IMR-90 (cell line): ENCODE measurements at regions of chr9 and their contacts with region 1.

Region 1: GRCh38 chr9:27413506-27414219 is 110.4 kb upstream of the IFNK start:
- DNase-seq: no peak
- ATAC-seq: no peak
- H3K4me3 ChIP-seq: peak overlapping the region; percentile 31; the same call in 1 of the 2 replicates
- H3K27ac ChIP-seq: no peak overlapping the region
- H3K4me1 ChIP-seq: no peaks in the 10 kb centered on the region
- H3K27me3 ChIP-seq: no peaks in the 10 kb centered on the region; the same call in 1 of the 2 replicates
- CTCF ChIP-seq: no peak
- POLR2A ChIP-seq: no peak
- RAD21 ChIP-seq: no peak

Region 2: GRCh38 chr9:26375448-26375847 is 1038.2 kb before region 1 on chr9:
- CTCF ChIA-PET with region 1: no interaction called
- POLR2A ChIA-PET with region 1: no interaction called
- dilution Hi-C with region 1: no loop called
- in situ Hi-C with region 1: no loop called
- intact Hi-C with region 1: no loop called
- DNase-seq: peak; percentile 0
- ATAC-seq: no peak
- H3K4me3 ChIP-seq: no peak overlapping the region
- H3K27ac ChIP-seq: no peak overlapping the region
- H3K4me1 ChIP-seq: no peaks in the 10 kb centered on the region
- H3K27me3 ChIP-seq: no peaks in the 10 kb centered on the region
- CTCF ChIP-seq: no peak
- POLR2A ChIP-seq: no peak
- RAD21 ChIP-seq: no peak

Region 3: DNA sequence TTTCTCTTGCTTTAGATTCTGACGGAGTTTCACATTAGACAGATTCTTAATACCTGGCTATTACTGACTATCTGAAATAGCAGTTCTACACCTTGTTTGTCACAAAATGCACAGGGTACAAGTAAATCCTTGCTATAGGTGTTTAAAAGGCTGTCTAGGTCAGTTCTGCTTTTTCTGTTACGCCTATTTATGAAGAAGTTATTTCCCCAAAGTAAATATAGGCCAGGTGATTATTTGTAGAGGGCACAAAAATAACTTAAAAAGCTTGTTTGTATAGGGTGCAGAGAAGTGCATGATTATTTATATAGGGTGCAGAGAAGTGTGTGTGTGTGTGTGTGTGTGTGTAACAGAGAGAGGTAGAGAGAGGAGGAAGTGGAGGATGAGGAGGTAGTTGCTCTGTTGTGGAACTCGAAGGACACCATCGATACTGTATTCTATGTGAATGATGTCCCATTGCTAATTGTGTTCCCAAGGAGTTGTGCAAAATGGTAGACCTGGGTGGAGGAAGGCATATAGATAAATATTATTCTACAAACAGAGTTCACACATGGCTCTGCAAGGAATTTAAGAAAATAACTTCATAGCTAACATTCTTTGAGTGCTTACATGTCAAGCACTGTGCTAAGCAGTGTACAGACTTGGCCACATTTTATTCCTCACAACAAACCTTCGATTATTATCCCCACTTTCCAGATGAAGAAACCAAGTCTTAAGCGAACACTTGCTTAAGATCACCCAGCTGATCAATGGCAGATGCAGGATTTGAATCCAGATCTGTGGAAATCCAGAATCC is 20.4 kb before region 1 on chr9:
- CTCF ChIA-PET with region 1: no interaction called
- POLR2A ChIA-PET with region 1: no interaction called
- dilution Hi-C with region 1: no loop called
- in situ Hi-C with region 1: no loop called
- intact Hi-C with region 1: loop called (anchors 2 kb)
- DNase-seq: no peak
- ATAC-seq: peak; percentile 59
- H3K4me3 ChIP-seq: no peak overlapping the region
- H3K27ac ChIP-seq: no peak overlapping the region
- H3K4me1 ChIP-seq: no peaks in the 10 kb centered on the region
- H3K27me3 ChIP-seq: no peaks in the 10 kb centered on the region
- CTCF ChIP-seq: no peak
- POLR2A ChIP-seq: no peak
- RAD21 ChIP-seq: no peak